Right cardiac atrium (tissue), 5 donors: ENCODE measurements at regions of chr7 and their contacts with region 1.

Region 1: DNA sequence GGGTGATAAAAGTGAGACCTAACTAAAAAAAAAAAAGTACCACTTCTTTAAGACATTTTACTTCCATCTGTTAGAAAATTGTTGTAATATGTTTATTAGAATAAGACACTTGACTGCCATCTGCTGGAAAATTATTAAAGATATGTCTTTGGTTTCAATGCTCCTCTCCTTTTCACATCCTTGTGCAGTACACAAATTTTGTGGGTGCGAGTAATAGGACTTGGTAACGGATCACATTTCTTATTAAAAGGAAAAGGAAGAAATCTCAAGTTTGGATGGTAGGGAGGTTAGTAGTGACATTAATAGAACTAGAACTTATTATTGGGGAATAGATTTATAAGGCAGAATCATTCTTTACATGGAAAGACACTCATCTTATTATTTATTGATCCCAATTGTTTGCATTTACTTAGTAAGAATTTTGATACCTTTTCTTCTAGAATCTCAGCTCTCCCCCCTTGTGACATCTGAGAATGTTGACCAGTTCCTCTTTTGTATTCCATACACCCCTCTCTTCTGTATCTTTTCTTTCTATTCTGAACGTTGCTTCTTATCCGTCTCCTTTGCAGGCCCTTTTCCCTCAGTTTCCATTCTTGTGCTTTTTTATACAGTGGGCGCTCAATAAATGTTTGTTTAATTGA is 43.1 kb upstream of the RPA3 start:
- DNase-seq: no peak
- ATAC-seq: peak; percentile 55 to 61
- H3K4me3 ChIP-seq: peak overlapping the region; percentile 92
- H3K27ac ChIP-seq: no peak overlapping the region
- H3K4me1 ChIP-seq: no peaks in the 10 kb centered on the region
- H3K27me3 ChIP-seq: no peaks in the 10 kb centered on the region

Region 2: GRCh38 chr7:7581531-7582179 is 179.8 kb before region 1 on chr7:
- intact Hi-C with region 1: no loop called
- DNase-seq: no peak
- ATAC-seq: no peak
- H3K4me3 ChIP-seq: no peak overlapping the region
- H3K27ac ChIP-seq: no peak overlapping the region
- H3K4me1 ChIP-seq: peaks cover 1% of the 10 kb centered on the region
- H3K27me3 ChIP-seq: no peaks in the 10 kb centered on the region

Region 3: GRCh38 chr7:7681179-7681935 is 80.1 kb before region 1 on chr7:
- intact Hi-C with region 1: loop called (anchors 5 kb)
- DNase-seq: no peak
- ATAC-seq: peak; percentile 84
- H3K4me3 ChIP-seq: no peak overlapping the region
- H3K27ac ChIP-seq: no peak overlapping the region
- H3K4me1 ChIP-seq: peaks cover 4% of the 10 kb centered on the region
- H3K27me3 ChIP-seq: no peaks in the 10 kb centered on the region

Region 4: GRCh38 chr7:7944619-7945282 is 183.3 kb after region 1 on chr7:
- intact Hi-C with region 1: no loop called
- DNase-seq: no peak
- ATAC-seq: peak in 1 of 2 donors; percentile 44
- H3K4me3 ChIP-seq: no peak overlapping the region
- H3K27ac ChIP-seq: no peak overlapping the region
- H3K4me1 ChIP-seq: no peaks in the 10 kb centered on the region
- H3K27me3 ChIP-seq: no peaks in the 10 kb centered on the region

Region 5: DNA sequence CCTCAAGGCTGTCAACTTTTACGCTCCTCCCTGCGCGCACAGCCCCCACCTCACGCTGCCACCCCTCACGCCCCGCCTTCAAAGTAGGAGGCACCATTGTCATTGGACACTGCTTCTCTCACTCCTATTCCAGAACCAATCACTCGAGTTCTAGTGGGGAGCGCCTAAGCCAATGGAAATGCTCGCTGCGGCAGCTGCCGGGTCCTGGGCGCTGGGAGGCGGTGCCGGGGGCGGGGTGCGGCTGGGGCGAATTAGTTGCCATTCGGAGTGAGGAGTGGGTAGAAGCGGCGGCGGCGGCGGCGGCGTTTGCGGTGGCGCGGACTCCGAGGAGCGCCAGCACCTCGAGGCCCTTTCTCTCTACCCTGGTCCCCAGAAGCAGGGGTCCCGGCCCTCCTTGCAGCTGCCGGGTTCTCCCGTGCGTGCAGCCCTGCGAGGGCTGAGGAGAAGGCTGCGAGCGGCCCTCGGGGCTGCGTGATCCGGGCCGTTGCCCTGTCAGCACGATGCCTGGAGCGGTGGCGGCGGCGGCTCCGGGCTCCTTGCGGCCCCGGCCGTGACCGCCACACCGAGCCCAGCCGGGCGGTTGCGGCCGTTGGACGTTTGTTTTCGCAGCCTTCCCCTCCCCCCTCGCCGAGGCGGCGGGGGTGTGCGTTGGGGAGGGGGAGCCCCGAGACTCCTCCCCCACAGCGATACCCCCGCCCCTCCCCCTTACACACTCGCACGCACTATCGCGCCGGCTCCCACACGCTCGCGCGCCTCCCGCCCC is 207.3 kb after region 1 on chr7 and contains the start of gene GLCCI1:
- intact Hi-C with region 1: no loop called
- DNase-seq: peak; percentile 96 to 98 (median 98)
- ATAC-seq: peak; percentile 99 to 100
- H3K4me3 ChIP-seq: peak within 1 kb of the TSS; percentile 79
- H3K27ac ChIP-seq: peak within 1 kb of the TSS; percentile 94
- H3K4me1 ChIP-seq: no peaks in the 10 kb centered on the region
- H3K27me3 ChIP-seq: no peaks in the 10 kb centered on the region
- total RNA-seq, gene GLCCI1: 4.7 to 8.3 (median 6.8) TPM

Region 6: DNA sequence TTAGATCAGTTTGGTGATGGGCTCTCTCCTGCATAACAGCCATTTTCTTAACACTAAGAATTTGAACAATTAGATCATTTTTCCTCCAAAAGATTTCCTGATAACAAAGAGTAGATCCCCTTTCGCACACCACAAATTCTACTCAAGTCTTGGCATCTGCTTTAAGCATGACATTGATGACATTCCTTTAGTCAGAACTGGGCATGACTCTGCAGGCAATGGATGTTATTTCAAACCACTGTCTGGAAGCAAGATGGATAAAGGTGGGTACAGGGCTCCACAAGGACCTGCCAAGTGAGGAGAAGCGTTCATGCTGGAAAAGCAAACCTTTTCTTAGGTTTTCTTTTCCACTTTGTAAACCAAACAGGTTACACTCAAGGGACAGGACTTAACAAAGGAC is 330.7 kb after region 1 on chr7:
- intact Hi-C with region 1: no loop called
- DNase-seq: no peak
- ATAC-seq: no peak
- H3K4me3 ChIP-seq: no peak overlapping the region
- H3K27ac ChIP-seq: no peak overlapping the region
- H3K4me1 ChIP-seq: peaks cover 2% of the 10 kb centered on the region
- H3K27me3 ChIP-seq: no peaks in the 10 kb centered on the region